A673 (cell line): ENCODE measurements at regions of chr11 and their contacts with region 1.

Region 1: DNA sequence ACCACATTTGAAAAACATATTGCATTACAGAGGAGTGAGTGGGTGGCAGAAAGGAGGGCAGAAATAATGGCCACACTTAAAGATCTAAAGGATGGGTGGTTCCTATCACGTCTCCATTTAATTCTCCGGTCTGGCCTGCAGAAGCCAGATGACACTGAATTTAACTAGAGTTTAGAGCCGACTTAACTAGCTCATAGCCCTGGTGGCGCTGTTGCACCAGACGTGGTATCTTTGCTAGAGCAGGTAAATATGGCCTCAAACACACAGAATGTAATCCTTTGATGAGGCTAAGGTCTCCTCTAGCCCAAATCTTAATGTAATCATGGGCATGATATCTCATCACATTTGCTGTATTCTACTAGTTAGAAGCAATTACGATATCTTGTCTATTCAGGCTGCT is 51.5 kb upstream of the GAL start:
- DNase-seq: peak; percentile 75
- H3K4me3 ChIP-seq: no peak overlapping the region
- H3K27ac ChIP-seq: no peak overlapping the region
- H3K4me1 ChIP-seq: no peaks in the 10 kb centered on the region
- H3K27me3 ChIP-seq: no peaks in the 10 kb centered on the region
- CTCF ChIP-seq: peak; percentile 79

Region 2: DNA sequence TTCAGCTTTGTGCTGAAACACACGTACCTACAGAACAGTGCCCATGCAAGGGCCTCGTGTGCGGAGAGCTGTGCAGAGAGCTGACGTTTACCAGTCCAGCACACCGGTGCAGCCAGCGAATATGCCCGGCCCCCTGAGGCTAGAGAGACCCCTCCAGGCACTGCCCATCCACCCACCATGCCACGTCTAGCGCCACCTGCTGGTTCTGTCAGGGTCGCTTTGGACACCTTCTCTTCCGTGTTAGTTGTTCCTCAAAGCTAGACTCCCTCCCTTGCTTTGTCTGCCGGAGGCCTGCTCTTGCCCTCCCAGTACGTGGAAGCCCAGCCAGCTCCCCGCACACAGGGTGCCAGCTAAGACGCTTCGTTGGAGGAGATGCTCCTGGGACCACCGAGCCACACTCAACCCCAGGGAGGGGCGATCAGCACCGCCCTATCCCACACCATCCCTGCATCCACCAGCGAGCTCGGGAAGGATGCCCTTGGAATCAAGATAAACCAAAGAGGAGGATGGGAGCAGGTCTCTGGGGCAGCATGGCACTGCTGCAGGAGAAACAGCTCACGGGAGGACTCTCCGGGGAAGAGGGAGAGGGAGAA is 165.5 kb after region 1 on chr11:
- CTCF ChIA-PET with region 1: interaction called, 8 read pairs
- POLR2A ChIA-PET with region 1: no interaction called
- intact Hi-C with region 1: loop called (anchors 5 kb)
- DNase-seq: peak; percentile 54
- H3K4me3 ChIP-seq: no peak overlapping the region
- H3K27ac ChIP-seq: no peak overlapping the region
- H3K4me1 ChIP-seq: no peaks in the 10 kb centered on the region
- H3K27me3 ChIP-seq: no peaks in the 10 kb centered on the region
- CTCF ChIP-seq: peak; percentile 90

Region 3: GRCh38 chr11:68855205-68855981 is 222.6 kb after region 1 on chr11:
- CTCF ChIA-PET with region 1: no interaction called
- POLR2A ChIA-PET with region 1: no interaction called
- intact Hi-C with region 1: loop called (anchors 10 kb)
- DNase-seq: peak; percentile 68
- H3K4me3 ChIP-seq: peak overlapping the region; percentile 53
- H3K27ac ChIP-seq: no peak overlapping the region
- H3K4me1 ChIP-seq: peaks cover 8% of the 10 kb centered on the region
- H3K27me3 ChIP-seq: peaks cover 10% of the 10 kb centered on the region
- CTCF ChIP-seq: peak; percentile 51

Region 4: GRCh38 chr11:68889948-68890446 is 257.2 kb after region 1 on chr11:
- CTCF ChIA-PET with region 1: interaction called, 4 read pairs
- POLR2A ChIA-PET with region 1: no interaction called
- intact Hi-C with region 1: loop called (anchors 10 kb)
- DNase-seq: peak; percentile 88
- H3K4me3 ChIP-seq: no peak overlapping the region
- H3K27ac ChIP-seq: peak overlapping the region; percentile 66
- H3K4me1 ChIP-seq: peaks cover 25% of the 10 kb centered on the region
- H3K27me3 ChIP-seq: no peaks in the 10 kb centered on the region
- CTCF ChIP-seq: peak; percentile 92

Region 5: DNA sequence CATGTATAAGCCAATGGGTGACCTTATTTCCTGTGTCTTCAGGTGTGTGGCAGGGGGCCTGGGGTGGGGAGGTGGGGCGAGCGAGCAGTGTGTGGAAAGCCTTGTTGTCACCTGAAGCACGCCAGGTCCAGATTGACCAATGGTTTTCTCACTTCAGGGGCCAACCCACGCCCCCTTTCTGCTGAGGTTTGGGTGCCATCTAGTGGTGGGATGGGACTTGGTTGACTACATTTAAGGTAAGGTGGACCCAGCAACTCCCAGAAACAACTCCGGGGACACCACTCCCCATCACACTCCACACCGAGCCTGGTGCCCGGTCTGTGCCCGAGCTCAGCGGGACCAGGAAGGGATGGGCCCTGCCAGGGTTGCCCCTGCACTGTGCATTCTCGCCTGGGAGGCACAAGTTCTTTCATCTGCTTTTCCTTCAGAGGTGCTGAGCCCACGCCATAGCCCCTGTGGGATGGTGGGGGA is 455.9 kb after region 1 on chr11:
- CTCF ChIA-PET with region 1: no interaction called
- POLR2A ChIA-PET with region 1: no interaction called
- intact Hi-C with region 1: loop called (anchors 2 kb)
- DNase-seq: peak; percentile 85
- H3K4me3 ChIP-seq: no peak overlapping the region
- H3K27ac ChIP-seq: no peak overlapping the region
- H3K4me1 ChIP-seq: no peaks in the 10 kb centered on the region
- H3K27me3 ChIP-seq: no peaks in the 10 kb centered on the region
- CTCF ChIP-seq: peak; percentile 87